Activated naive CD4-positive, alpha-beta T cell treated with anti-CD3 and anti-CD28 coated beads for 36 hours (primary cell): ENCODE measurements at regions of chr12 and their contacts with region 1.

Region 1: GRCh38 chr12:28202374-28203130 is 12.3 kb downstream of the CCDC91 start:
- DNase-seq: no peak
- H3K4me3 Mint-ChIP-seq: no peak overlapping the region
- H3K27ac Mint-ChIP-seq: no peak overlapping the region
- H3K4me1 Mint-ChIP-seq: peaks cover 15% of the 10 kb centered on the region
- H3K27me3 Mint-ChIP-seq: no peaks in the 10 kb centered on the region

Region 2: DNA sequence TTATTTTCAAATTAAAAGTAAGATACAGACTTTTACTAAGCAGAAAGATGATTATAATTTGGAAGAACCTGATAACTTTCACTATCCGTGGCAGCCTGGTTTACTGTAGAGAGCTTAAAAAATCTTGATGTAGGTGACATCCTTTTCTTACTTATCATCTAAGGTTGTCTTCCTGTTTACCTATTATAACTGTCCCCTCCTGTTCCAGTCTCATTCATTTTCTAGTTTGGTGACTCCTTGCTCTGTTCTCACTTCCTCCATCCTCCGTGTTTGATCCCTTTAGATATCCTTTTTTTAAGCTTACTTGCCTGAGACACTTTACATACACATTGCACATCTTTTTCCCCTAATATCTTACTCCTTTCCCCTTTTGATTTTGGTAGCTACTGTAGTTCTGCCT is 15.3 kb after region 1 on chr12:
- CTCF ChIA-PET with region 1: interaction called, 3 read pairs
- intact Hi-C with region 1: loop called (anchors 2 kb)
- DNase-seq: no peak
- H3K4me3 Mint-ChIP-seq: no peak overlapping the region
- H3K27ac Mint-ChIP-seq: peak overlapping the region; percentile 22
- H3K4me1 Mint-ChIP-seq: peaks cover 56% of the 10 kb centered on the region
- H3K27me3 Mint-ChIP-seq: no peaks in the 10 kb centered on the region